GM12878 (cell line): ENCODE measurements at regions of chr1 and their contacts with region 1.

Region 1: GRCh38 chr1:113042285-113043143 is 30.5 kb upstream of the LRIG2 start:
- DNase-seq: no peak
- ATAC-seq: peak; percentile 92
- H3K4me3 ChIP-seq: 0 out of 2 replicates have a peak overlapping the region, but pooled peaks have one; percentile 26
- H3K27ac ChIP-seq: peak overlapping the region; percentile 34; the same call in 1 of the 2 replicates
- H3K4me1 ChIP-seq: peaks cover 29% of the 10 kb centered on the region
- H3K27me3 ChIP-seq: no peaks in the 10 kb centered on the region
- CTCF ChIP-seq: peak; percentile 59 to 85 (median 66); a peak in 5 of 6 replicates
- EP300 ChIP-seq: no peak
- POLR2A ChIP-seq: no peak
- RAD21 ChIP-seq: peak; percentile 90

Region 2: GRCh38 chr1:112809253-112809684 is 233.2 kb before region 1 on chr1:
- CTCF ChIA-PET with region 1: interaction called, 47 read pairs
- POLR2A ChIA-PET with region 1: no interaction called
- RAD21 ChIA-PET with region 1: interaction called, 3 read pairs
- SMC1A ChIA-PET with region 1: interaction called, 13 read pairs
- in situ Hi-C with region 1: loop called (anchors 5 kb)
- intact Hi-C with region 1: loop called (anchors 1 kb)
- DNase-seq: no peak
- ATAC-seq: peak; percentile 96
- H3K4me3 ChIP-seq: no peak overlapping the region
- H3K27ac ChIP-seq: no peak overlapping the region
- H3K4me1 ChIP-seq: no peaks in the 10 kb centered on the region
- H3K27me3 ChIP-seq: peaks cover 0 to 4% of the 10 kb centered on the region in 2 experiments; a peak in 1 of 4 replicates
- CTCF ChIP-seq: peak; percentile 86 to 96 (median 88)
- EP300 ChIP-seq: no peak
- POLR2A ChIP-seq: no peak
- RAD21 ChIP-seq: peak; percentile 76

Region 3: DNA sequence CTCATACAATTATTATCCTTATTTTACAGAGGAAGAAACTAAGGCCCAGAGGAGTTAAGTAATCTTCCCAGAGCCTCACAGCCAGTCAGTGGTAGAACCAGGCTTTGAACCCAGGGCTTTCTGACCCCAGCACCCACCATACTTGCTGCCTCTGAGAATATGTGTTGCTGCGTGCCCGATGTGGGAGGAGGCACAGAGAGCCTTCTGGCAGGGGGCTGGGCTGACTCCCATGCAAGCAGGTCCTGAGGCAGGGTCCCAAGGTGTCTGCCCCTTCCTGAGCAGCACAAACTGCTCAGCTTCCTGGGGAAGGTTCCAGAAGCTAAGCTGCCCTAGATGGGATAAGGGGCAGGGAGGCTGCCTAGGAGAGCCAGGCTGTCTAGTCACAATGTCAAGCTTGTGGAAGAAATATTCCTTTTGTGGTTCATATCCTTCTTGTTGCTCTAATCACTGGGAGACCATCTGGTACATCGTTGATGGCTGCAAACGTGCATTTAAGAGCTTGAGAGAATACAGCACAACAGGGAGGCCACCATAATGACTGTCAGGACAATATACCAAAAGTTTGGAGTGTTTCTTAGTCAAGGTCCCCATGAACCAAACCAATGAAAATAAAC is 154.0 kb before region 1 on chr1:
- CTCF ChIA-PET with region 1: interaction called, 196 read pairs
- POLR2A ChIA-PET with region 1: interaction called, 4 read pairs
- RAD21 ChIA-PET with region 1: interaction called, 105 read pairs
- SMC1A ChIA-PET with region 1: interaction called, 11 read pairs
- in situ Hi-C with region 1: loop called (anchors 5 kb)
- intact Hi-C with region 1: no loop called
- DNase-seq: no peak
- ATAC-seq: no peak
- H3K4me3 ChIP-seq: no peak overlapping the region
- H3K27ac ChIP-seq: no peak overlapping the region
- H3K4me1 ChIP-seq: no peaks in the 10 kb centered on the region
- H3K27me3 ChIP-seq: no peaks in the 10 kb centered on the region
- CTCF ChIP-seq: no peak
- EP300 ChIP-seq: no peak
- POLR2A ChIP-seq: no peak
- RAD21 ChIP-seq: no peak

Region 4: DNA sequence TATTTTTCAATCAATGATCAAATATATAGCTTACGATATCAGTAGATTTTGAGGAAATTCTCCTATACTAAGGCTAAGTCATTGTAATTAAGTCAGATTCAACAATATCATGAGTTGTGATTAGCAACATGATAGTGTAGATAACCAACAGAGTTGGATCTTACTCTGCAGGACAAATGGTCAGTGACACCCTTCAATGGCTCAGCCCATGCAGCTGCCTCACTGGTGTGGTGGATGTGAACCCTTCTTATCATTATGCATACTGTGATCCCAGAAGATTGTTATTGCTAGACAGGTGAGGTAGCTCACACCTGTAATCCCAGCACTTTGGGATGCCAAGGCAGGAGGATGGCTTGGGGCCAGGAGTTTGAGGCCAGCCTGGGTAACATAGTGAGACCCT is 92.1 kb before region 1 on chr1:
- CTCF ChIA-PET with region 1: interaction called, 47 read pairs
- POLR2A ChIA-PET with region 1: interaction called, 6 read pairs
- RAD21 ChIA-PET with region 1: interaction called, 14 read pairs
- SMC1A ChIA-PET with region 1: interaction called, 13 read pairs
- in situ Hi-C with region 1: no loop called
- intact Hi-C with region 1: loop called (anchors 2 kb)
- DNase-seq: no peak
- ATAC-seq: peak; percentile 8; the same call in 1 of the 3 replicates
- H3K4me3 ChIP-seq: no peak overlapping the region
- H3K27ac ChIP-seq: no peak overlapping the region
- H3K4me1 ChIP-seq: peaks cover 4% of the 10 kb centered on the region; the same call in 1 of the 2 replicates
- H3K27me3 ChIP-seq: no peaks in the 10 kb centered on the region
- CTCF ChIP-seq: no peak
- EP300 ChIP-seq: no peak
- POLR2A ChIP-seq: no peak
- RAD21 ChIP-seq: no peak

Region 5: DNA sequence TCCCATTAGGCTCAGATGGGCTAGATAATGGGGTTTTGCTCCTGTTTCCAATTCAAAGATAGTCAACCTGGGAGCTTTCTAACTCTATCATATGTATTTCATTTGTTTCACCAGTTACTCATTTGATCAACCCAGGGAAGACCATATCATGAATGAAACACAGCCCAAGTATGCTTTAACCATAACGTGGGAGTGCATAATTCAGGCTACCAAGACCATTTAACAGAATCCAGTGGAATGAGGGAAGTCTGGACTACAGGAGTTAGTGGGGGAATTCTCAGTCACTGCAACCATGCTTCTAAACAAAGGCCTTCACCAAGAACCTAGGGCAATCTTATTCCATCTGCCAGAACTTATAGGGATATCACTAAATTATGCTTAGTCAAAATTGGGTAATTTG is 71.5 kb before region 1 on chr1:
- CTCF ChIA-PET with region 1: no interaction called
- POLR2A ChIA-PET with region 1: no interaction called
- RAD21 ChIA-PET with region 1: interaction called, 4 read pairs
- SMC1A ChIA-PET with region 1: interaction called, 11 read pairs
- in situ Hi-C with region 1: no loop called
- intact Hi-C with region 1: no loop called
- DNase-seq: no peak
- ATAC-seq: no peak
- H3K4me3 ChIP-seq: no peak overlapping the region
- H3K27ac ChIP-seq: no peak overlapping the region
- H3K4me1 ChIP-seq: no peaks in the 10 kb centered on the region
- H3K27me3 ChIP-seq: no peaks in the 10 kb centered on the region
- CTCF ChIP-seq: no peak
- EP300 ChIP-seq: no peak
- POLR2A ChIP-seq: no peak
- RAD21 ChIP-seq: no peak

Region 6: DNA sequence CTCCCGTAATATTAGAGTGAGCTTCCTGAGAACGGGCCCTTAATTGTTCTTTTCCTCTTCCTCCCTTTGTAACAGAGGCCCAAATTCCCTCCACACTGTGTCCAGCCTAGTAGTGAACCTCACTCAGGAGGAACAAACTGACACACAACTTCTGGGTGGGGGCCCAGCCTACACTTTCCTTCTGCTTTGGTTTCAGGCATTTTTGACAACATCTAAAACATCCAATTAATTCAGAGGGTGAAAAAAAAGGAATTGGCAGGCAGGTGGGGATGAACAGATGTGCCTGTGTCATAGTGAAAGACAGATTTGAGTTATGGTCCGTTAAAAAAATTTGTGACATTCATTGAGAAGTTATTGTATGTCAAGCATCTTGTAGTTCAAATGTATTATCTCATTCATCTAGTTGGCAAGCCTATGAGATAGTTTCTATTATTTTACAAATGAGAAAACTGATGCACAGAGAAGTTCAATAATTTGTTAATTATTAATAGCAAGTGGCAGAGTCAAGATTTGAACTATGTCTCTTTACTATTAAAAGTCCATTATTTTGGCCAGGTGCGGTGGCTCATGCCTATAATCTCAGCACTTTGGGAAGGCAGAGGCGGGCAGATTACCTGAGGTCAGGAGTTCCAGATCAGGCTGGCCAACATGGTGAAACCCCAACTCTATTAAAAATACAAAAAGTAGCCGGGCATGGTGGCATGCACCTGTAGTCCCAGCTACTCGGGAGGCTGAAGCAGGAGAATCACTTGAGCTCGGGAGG is 11.2 kb before region 1 on chr1:
- CTCF ChIA-PET with region 1: interaction called, 17 read pairs
- POLR2A ChIA-PET with region 1: interaction called, 5 read pairs
- RAD21 ChIA-PET with region 1: interaction called, 24 read pairs
- SMC1A ChIA-PET with region 1: interaction called, 12 read pairs
- in situ Hi-C with region 1: no loop called
- intact Hi-C with region 1: no loop called
- DNase-seq: no peak
- ATAC-seq: peak; percentile 89
- H3K4me3 ChIP-seq: no peak overlapping the region
- H3K27ac ChIP-seq: no peak overlapping the region
- H3K4me1 ChIP-seq: peaks cover 9% of the 10 kb centered on the region; the same call in 1 of the 2 replicates
- H3K27me3 ChIP-seq: no peaks in the 10 kb centered on the region
- CTCF ChIP-seq: no peak
- EP300 ChIP-seq: peak; percentile 72 to 87
- POLR2A ChIP-seq: no peak
- RAD21 ChIP-seq: no peak

Region 7: GRCh38 chr1:113109908-113110554 is 67.5 kb after region 1 on chr1:
- CTCF ChIA-PET with region 1: no interaction called
- POLR2A ChIA-PET with region 1: no interaction called
- RAD21 ChIA-PET with region 1: no interaction called
- SMC1A ChIA-PET with region 1: no interaction called
- in situ Hi-C with region 1: no loop called
- intact Hi-C with region 1: no loop called
- DNase-seq: no peak
- ATAC-seq: no peak
- H3K4me3 ChIP-seq: no peak overlapping the region
- H3K27ac ChIP-seq: no peak overlapping the region
- H3K4me1 ChIP-seq: no peaks in the 10 kb centered on the region
- H3K27me3 ChIP-seq: no peaks in the 10 kb centered on the region
- CTCF ChIP-seq: no peak
- EP300 ChIP-seq: no peak
- POLR2A ChIP-seq: no peak
- RAD21 ChIP-seq: no peak